Activated CD8-positive, alpha-beta memory T cell treated with anti-CD3 and anti-CD28 coated beads, Interleukin-2, amount 10 ng/mL, durations not matched to agents 7 days and 5 days (primary cell): ENCODE measurements at regions of chr2 and their contacts with region 1.

Region 1: DNA sequence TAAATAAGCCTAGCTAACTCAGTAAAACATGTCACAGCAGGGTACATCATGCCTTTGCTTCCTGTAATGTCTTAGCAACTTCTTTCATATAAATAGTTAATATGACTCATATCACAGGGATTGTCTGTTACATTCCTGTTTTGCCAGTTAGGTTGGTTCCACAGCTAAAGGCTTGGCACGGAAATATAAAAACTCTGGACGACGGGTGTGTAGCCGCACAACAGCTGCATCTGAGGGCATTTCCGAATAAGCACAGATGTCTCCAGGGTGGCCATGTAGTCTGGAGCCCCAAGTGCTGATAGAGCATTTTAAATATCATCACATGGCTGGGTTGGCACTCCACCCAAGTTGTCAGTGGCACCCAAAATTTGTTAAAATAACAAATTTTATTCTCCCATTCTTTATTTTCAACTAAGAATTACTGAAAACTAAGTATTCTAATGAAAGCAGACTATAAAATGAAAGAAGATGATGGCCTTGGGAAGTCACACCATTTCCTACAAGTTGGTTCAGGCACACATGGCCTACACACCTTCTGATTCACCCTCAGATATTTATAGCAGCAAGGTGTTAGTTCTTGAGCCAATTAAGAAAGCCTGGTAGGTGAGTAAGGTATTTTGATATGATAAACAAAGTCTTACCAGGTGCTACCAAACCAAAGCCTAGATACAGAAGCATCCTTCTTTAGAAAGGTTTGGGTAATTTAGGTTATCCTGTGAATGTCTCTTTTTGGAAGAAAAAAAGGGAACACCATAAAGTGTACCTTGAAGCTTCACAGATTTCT is 61.8 kb upstream of the STK17B start:
- DNase-seq: no peak
- ATAC-seq: no peak
- H3K4me3 Mint-ChIP-seq: no peak overlapping the region
- H3K27ac Mint-ChIP-seq: peak overlapping the region; percentile 87
- H3K4me1 Mint-ChIP-seq: peaks cover 91% of the 10 kb centered on the region
- H3K27me3 Mint-ChIP-seq: no peaks in the 10 kb centered on the region

Region 2: GRCh38 chr2:196113061-196113974 is 119.9 kb before region 1 on chr2:
- CTCF ChIA-PET with region 1: no interaction called
- DNase-seq: no peak
- ATAC-seq: no peak
- H3K4me3 Mint-ChIP-seq: no peak overlapping the region
- H3K27ac Mint-ChIP-seq: no peak overlapping the region
- H3K4me1 Mint-ChIP-seq: peaks cover 8% of the 10 kb centered on the region
- H3K27me3 Mint-ChIP-seq: no peaks in the 10 kb centered on the region

Region 3: GRCh38 chr2:196208915-196209314 is 24.3 kb before region 1 on chr2:
- CTCF ChIA-PET with region 1: interaction called, 27 read pairs
- DNase-seq: no peak
- ATAC-seq: no peak
- H3K4me3 Mint-ChIP-seq: no peak overlapping the region
- H3K27ac Mint-ChIP-seq: peak overlapping the region; percentile 6
- H3K4me1 Mint-ChIP-seq: peaks cover 62% of the 10 kb centered on the region
- H3K27me3 Mint-ChIP-seq: no peaks in the 10 kb centered on the region

Region 4: DNA sequence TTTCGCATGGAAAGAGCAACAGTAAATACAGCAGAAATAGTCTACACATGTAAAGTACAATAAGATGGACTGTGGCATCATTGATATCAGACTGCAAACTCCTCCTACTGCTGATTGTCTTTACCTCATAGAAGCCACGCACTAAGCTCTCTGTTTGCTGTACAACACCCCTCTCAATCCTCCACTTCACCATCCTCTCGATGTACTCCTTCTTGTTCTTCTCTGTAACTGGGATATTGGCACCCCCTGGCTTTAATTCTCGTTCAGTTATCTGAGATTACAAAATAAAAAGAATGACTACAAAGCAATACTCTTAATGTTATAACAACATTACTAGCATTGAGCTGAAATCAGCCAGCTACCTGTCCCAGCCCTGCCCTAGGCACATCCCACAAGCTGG is 12.5 kb before region 1 on chr2:
- CTCF ChIA-PET with region 1: interaction called, 19 read pairs
- DNase-seq: no peak
- ATAC-seq: peak; percentile 52
- H3K4me3 Mint-ChIP-seq: no peak overlapping the region
- H3K27ac Mint-ChIP-seq: no peak overlapping the region
- H3K4me1 Mint-ChIP-seq: peaks cover 43% of the 10 kb centered on the region
- H3K27me3 Mint-ChIP-seq: no peaks in the 10 kb centered on the region

Region 5: DNA sequence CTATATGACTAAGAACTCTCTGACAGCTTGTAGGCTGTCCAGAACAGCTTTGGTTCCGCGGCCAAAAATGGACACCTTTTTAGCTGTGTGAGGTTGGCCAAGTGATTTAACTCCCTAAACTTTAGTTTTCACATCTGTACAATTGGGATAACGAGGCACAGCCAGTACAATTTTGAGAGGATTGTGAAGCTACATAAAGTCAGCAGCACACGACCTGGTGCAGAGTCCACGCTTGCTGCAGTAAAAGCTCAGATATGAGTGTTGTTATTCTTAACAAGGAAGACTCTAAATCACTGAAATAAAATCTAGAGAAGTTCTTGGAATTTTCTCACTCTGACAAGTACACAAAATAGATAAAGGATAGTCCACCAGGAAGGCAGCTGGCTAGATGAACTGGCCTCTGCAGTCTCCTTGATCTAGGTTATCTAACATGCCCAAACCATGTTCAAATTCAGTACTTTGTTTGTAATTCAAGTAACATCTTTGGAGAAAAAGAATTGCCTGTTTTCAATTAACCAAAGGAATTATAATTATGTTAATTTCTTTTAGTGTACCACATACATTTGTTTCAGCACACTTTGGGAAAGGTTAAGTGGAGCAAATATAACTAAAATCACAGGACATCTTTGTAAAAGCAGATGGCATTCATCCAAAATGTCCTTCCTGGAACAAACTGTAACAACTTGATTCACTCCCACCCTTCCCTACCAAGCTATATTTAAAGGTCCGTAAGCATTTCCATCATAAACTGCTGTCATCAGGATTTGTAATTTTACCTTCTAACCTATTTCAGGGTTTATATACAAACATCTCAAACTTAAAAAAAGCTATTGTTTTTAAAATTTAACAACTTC is 139.8 kb after region 1 on chr2:
- CTCF ChIA-PET with region 1: no interaction called
- DNase-seq: no peak
- ATAC-seq: no peak
- H3K4me3 Mint-ChIP-seq: no peak overlapping the region
- H3K27ac Mint-ChIP-seq: no peak overlapping the region
- H3K4me1 Mint-ChIP-seq: no peaks in the 10 kb centered on the region
- H3K27me3 Mint-ChIP-seq: peaks cover 3% of the 10 kb centered on the region